ENCODE measurements at regions of chr6 and their contacts with region 1.

Region 1: DNA sequence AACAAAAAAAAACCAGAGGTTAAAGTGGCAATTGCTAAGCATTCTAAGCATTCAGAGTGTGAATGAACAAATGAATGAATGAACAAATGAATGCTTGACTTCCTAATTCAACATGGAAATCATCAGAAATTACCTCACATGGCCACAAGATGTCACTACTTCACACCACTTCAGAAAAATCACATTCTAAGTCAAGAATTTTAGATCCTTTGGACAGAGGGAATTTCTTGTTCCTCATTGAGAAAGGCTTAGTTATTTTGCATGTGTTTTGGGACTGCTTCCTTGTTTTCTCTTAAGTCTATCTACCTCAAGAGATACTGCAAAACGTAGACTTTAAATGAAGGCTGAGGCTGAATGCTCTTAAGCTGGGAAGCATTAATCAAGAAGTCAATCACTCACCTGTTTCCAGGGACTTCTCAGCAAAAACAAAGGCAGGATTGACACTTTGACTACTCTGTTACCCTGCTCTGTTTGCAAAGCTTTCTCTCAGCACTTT is 120.2 kb downstream of the MBOAT1 start:
- DNase-seq: peak; percentile 74 to 84 (median 82)
- H3K4me3 ChIP-seq: no peak overlapping the region
- H3K27ac ChIP-seq: no peak overlapping the region
- H3K4me1 ChIP-seq: no peaks in the 10 kb centered on the region
- H3K27me3 ChIP-seq: no peaks in the 10 kb centered on the region

Region 2: GRCh38 chr6:20117474-20117873 is 25.4 kb after region 1 on chr6:
- CTCF ChIA-PET with region 1: interaction called, 12 read pairs
- POLR2A ChIA-PET with region 1: no interaction called
- DNase-seq: no peak
- H3K4me3 ChIP-seq: no peak overlapping the region
- H3K27ac ChIP-seq: no peak overlapping the region
- H3K4me1 ChIP-seq: peaks cover 0 to 7% (median 2%) of the 10 kb centered on the region in 4 experiments
- H3K27me3 ChIP-seq: no peaks in the 10 kb centered on the region